Caco-2 (cell line): ENCODE measurements at regions of chr14 and their contacts with region 1.

Region 1: GRCh38 chr14:82528016-82528415 is 994.4 kb upstream of the SEL1L start:
- DNase-seq: peak in 1 of 2 experiments; percentile 17
- H3K4me3 ChIP-seq: no peak overlapping the region
- H3K4me3 Mint-ChIP-seq: peak overlapping the region; percentile 10
- H3K27ac Mint-ChIP-seq: peak overlapping the region; percentile 81
- H3K4me1 ChIP-seq: peaks cover 17% of the 10 kb centered on the region
- H3K4me1 Mint-ChIP-seq: peaks cover 12% of the 10 kb centered on the region
- H3K27me3 ChIP-seq: no peaks in the 10 kb centered on the region
- H3K27me3 Mint-ChIP-seq: no peaks in the 10 kb centered on the region
- CTCF ChIP-seq: no peak

Region 2: GRCh38 chr14:82549306-82549990 is 21.4 kb after region 1 on chr14:
- CTCF ChIA-PET with region 1: no interaction called
- POLR2A ChIA-PET with region 1: no interaction called
- intact Hi-C with region 1: loop called (anchors 1 kb)
- DNase-seq: no peak
- H3K4me3 ChIP-seq: no peak overlapping the region
- H3K4me3 Mint-ChIP-seq: no peak overlapping the region
- H3K27ac Mint-ChIP-seq: no peak overlapping the region
- H3K4me1 ChIP-seq: peaks cover 6% of the 10 kb centered on the region
- H3K4me1 Mint-ChIP-seq: peaks cover 3% of the 10 kb centered on the region
- H3K27me3 ChIP-seq: no peaks in the 10 kb centered on the region
- H3K27me3 Mint-ChIP-seq: no peaks in the 10 kb centered on the region
- CTCF ChIP-seq: no peak